ENCODE measurements at regions of chr17 and their contacts with region 1.

Region 1: DNA sequence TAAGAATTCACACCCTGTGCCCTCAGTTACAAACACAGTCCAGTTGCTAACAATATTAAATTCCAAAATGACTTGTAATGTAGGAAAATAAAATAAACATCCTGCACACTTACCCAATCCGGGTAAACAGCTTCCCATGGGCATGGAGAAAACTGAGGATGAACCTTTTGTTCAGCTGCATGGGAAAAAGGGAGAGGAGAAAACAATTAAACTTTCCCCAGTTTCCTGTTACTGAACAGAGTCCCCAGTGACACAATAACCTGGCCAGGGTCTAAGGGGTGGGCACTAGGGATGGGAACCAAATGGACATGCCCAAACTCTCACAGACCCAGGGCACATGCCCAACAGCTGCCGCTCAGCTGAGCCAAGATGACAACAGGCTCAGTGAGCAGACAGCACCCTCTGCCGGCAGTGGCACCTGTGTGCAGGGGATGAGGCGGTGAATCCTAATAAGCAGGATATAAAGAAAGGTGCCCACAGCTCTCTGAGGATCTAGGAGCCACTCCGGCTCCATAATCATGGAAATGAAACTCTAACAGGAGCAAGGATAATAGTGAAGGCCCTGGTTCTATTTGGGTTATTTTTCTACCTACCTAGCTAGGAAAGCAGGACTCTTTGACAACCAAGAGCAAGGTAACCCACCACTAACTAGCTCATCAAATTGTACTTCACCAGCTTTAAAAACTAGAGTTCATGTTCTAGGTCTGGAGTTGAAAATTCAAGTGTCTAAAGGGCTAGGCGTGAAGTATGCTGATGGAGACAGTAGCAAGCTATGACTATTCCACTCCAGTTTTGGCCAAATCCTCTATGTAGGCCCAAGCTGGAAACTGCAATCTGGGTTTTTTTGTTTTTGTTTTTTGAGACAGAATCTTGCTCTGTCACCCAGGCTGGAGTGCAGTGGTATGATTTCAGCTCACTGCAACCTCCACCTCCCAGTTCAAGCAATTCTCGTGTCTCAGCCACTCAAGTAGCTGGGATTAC is 58.8 kb downstream of the SMG6 start:
- DNase-seq: peak; percentile 93
- H3K4me3 Mint-ChIP-seq: no peak overlapping the region
- H3K27ac Mint-ChIP-seq: peak overlapping the region; percentile 53
- H3K4me1 Mint-ChIP-seq: peaks cover 37% of the 10 kb centered on the region
- H3K27me3 Mint-ChIP-seq: no peaks in the 10 kb centered on the region

Region 2: DNA sequence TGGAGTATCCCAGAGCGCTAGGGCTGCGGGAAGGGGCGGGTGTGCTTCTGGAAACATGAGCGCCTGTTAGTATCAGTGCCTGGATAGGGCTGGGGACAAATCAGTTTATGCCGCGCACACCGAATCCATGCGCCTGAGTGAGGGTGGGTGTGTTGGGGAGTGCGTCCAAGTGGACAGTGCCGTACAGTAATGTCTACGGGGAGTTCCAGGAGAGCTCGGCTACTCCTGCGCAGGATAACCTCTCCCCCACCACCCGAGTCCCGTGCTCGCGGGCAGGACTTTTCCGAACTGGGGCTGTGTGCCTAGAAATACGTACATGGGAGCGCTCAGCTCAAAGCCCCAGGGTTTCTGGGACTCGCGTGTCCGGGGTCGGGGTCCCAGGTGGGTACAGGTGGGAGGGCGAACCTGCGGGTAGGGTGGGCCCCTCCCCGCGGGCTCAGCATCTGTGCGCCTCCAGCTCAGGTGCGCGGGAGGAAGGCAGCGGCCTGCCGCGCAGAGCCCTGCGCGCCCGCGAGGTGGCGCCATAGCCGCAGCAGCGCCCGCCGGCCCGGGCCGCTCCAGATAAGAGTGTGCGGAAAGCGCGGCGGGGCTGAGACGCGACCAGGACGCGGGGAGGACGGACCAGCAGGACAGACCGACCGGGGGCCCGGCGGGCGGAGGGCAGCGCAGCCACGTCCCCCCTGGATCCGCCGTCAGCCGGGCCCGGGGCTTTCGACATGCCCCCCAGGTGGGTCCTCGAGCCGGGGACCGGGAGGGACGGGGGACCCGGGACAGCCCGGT is 190.1 kb before region 1 on chr17 and contains the start of gene HIC1:
- CTCF ChIA-PET with region 1: interaction called, 44 read pairs
- intact Hi-C with region 1: loop called (anchors 1 kb)
- DNase-seq: peak; percentile 79
- H3K4me3 Mint-ChIP-seq: peak within 1 kb of the TSS; percentile 73
- H3K27ac Mint-ChIP-seq: peak within 1 kb of the TSS; percentile 36
- H3K4me1 Mint-ChIP-seq: peaks cover 10% of the 10 kb centered on the region
- H3K27me3 Mint-ChIP-seq: peaks cover 15% of the 10 kb centered on the region
- total RNA-seq, gene HIC1: 14.8 TPM

Region 3: GRCh38 chr17:2070241-2071023 is 174.4 kb before region 1 on chr17:
- CTCF ChIA-PET with region 1: interaction called, 19 read pairs
- intact Hi-C with region 1: loop called (anchors 1 kb)
- DNase-seq: peak; percentile 87
- H3K4me3 Mint-ChIP-seq: peak overlapping the region; percentile 22
- H3K27ac Mint-ChIP-seq: peak overlapping the region; percentile 43
- H3K4me1 Mint-ChIP-seq: peaks cover 32% of the 10 kb centered on the region
- H3K27me3 Mint-ChIP-seq: no peaks in the 10 kb centered on the region

Region 4: GRCh38 chr17:2170023-2170422 is 74.8 kb before region 1 on chr17:
- CTCF ChIA-PET with region 1: interaction called, 15 read pairs
- intact Hi-C with region 1: no loop called
- DNase-seq: peak; percentile 38
- H3K4me3 Mint-ChIP-seq: no peak overlapping the region
- H3K27ac Mint-ChIP-seq: no peak overlapping the region
- H3K4me1 Mint-ChIP-seq: no peaks in the 10 kb centered on the region
- H3K27me3 Mint-ChIP-seq: no peaks in the 10 kb centered on the region

Region 5: DNA sequence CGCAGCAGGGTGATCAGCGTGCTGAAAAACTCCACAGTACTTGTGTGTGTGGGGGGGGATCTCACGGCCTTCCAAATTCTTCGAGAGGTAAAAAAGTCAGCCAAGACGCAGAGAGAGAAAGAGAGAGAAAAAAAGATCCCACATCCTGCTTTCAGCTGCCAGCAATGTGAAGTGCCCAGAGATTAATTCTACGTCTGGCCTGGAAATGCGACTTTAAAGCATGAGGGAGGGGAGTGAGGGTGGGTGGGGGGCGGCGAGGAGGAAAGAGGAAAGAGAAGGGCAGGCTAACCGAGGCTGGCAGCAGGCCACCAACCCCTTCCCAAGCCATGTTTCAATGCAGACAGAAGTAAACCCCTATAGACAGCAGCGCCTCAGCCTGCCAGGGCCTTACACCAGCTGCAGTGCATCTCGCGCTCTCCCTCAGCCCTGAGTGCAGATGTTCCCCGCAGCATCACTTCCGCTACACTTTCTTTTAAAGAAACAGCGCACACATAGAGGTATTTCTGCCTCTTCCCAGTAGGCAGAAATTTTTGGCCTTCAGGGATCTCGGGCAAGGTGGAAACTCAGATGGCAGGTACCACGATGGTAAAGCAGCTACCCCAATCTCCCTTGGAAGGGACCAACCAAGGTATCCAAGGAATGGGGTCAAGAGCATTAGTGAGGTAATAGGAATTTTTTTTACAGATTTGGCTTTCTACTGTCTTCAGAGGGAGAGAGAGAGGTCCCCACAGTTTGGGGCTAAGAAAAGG is 29.0 kb before region 1 on chr17:
- CTCF ChIA-PET with region 1: interaction called, 23 read pairs
- intact Hi-C with region 1: loop called (anchors 5 kb)
- DNase-seq: peak; percentile 86
- H3K4me3 Mint-ChIP-seq: peak overlapping the region; percentile 78
- H3K27ac Mint-ChIP-seq: peak overlapping the region; percentile 94
- H3K4me1 Mint-ChIP-seq: peaks cover 52% of the 10 kb centered on the region
- H3K27me3 Mint-ChIP-seq: no peaks in the 10 kb centered on the region

Region 6: GRCh38 chr17:2259769-2260536 is 15.1 kb after region 1 on chr17:
- CTCF ChIA-PET with region 1: interaction called, 38 read pairs
- intact Hi-C with region 1: no loop called
- DNase-seq: peak; percentile 96
- H3K4me3 Mint-ChIP-seq: peak overlapping the region; percentile 72
- H3K27ac Mint-ChIP-seq: peak overlapping the region; percentile 100
- H3K4me1 Mint-ChIP-seq: peaks cover 71% of the 10 kb centered on the region
- H3K27me3 Mint-ChIP-seq: no peaks in the 10 kb centered on the region

Region 7: GRCh38 chr17:2282297-2282873 is 37.5 kb after region 1 on chr17:
- CTCF ChIA-PET with region 1: interaction called, 75 read pairs
- intact Hi-C with region 1: loop called (anchors 2 kb)
- DNase-seq: no peak
- H3K4me3 Mint-ChIP-seq: no peak overlapping the region
- H3K27ac Mint-ChIP-seq: peak overlapping the region; percentile 38
- H3K4me1 Mint-ChIP-seq: peaks cover 29% of the 10 kb centered on the region
- H3K27me3 Mint-ChIP-seq: no peaks in the 10 kb centered on the region